ENCODE measurements at regions of chr1 and their contacts with region 1.

Region 1: GRCh38 chr1:152440635-152441471 is 26.8 kb upstream of the CRNN start:
- DNase-seq: peak; percentile 66
- H3K4me3 ChIP-seq: no peak overlapping the region
- H3K27ac ChIP-seq: no peak overlapping the region
- H3K4me1 ChIP-seq: 0 out of 4 replicates have a peak, but pooled peaks cover 0 to 5% of the 10 kb centered on the region in 2 experiments
- H3K27me3 ChIP-seq: peaks cover 40% of the 10 kb centered on the region; the same call in 1 of the 2 replicates
- CTCF ChIP-seq: peak; percentile 78
- EP300 ChIP-seq: no peak
- RAD21 ChIP-seq: peak; percentile 67

Region 2: GRCh38 chr1:152398812-152399698 is 41.8 kb before region 1 on chr1:
- CTCF ChIA-PET with region 1: interaction called, 10 read pairs
- POLR2A ChIA-PET with region 1: no interaction called
- DNase-seq: no peak
- H3K4me3 ChIP-seq: no peak overlapping the region
- H3K27ac ChIP-seq: no peak overlapping the region
- H3K4me1 ChIP-seq: no peaks in the 10 kb centered on the region
- H3K27me3 ChIP-seq: no peaks in the 10 kb centered on the region; the same call in 1 of the 2 replicates
- CTCF ChIP-seq: peak; percentile 54
- EP300 ChIP-seq: no peak
- RAD21 ChIP-seq: no peak

Measured in SK-N-SH (cell line).